Activated naive CD4-positive, alpha-beta T cell treated with anti-CD3 and anti-CD28 coated beads for 36 hours (primary cell): ENCODE measurements at regions of chr2 and their contacts with region 1.

Region 1: DNA sequence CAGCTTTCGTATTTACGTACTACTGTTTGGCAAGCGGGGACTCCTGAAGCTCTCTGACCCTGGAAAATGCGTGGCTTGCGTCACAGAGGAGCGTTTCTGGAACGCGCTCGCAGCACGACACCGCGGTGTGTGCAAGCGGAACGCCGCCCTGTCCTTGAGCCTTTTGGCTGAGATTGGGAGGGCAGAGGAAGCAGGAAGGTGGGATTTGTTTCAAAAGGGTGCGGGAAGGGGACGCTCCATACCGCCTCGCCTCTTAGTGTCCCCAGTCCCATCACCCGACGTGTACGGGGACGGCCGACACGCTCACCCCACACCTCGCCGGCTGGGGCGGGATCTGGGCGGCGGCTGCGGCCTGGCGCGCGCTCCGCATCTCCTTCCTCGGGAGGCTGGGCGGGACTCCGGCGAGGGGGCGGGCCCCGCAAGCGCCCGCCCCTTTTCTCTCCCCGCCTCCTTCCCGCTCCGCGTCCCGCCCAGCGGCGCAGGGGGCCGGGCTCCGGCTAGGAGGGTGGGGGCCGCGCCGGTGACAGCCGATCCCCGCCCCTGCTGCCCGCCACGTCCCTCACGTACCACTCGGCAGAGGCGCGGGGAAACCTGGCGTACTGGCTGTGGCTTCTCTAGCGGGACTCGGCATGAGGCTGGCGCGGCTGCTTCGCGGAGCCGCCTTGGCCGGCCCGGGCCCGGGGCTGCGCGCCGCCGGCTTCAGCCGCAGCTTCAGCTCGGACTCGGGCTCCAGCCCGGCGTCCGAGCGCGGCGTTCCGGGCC is at the start of gene PDK1:
- DNase-seq: peak; percentile 90
- H3K4me3 Mint-ChIP-seq: peak within 1 kb of the TSS; percentile 93
- H3K27ac Mint-ChIP-seq: peak within 1 kb of the TSS; percentile 94
- H3K4me1 Mint-ChIP-seq: peaks cover 53% of the 10 kb centered on the region
- H3K27me3 Mint-ChIP-seq: no peaks in the 10 kb centered on the region
- total RNA-seq, gene PDK1: 31.9 to 35.3 TPM

Region 2: GRCh38 chr2:171687287-171688128 is 868.2 kb before region 1 on chr2 and contains the start of gene DYNC1I2:
- CTCF ChIA-PET with region 1: no interaction called
- intact Hi-C with region 1: loop called (anchors 1 kb)
- DNase-seq: peak; percentile 88
- H3K4me3 Mint-ChIP-seq: peak within 1 kb of the TSS; percentile 84
- H3K27ac Mint-ChIP-seq: peak within 1 kb of the TSS; percentile 85
- H3K4me1 Mint-ChIP-seq: peaks cover 15% of the 10 kb centered on the region
- H3K27me3 Mint-ChIP-seq: no peaks in the 10 kb centered on the region
- total RNA-seq, gene DYNC1I2: 37.8 to 38.9 TPM

Region 3: GRCh38 chr2:171922230-171923022 is 633.3 kb before region 1 on chr2 and contains the start of gene HAT1:
- CTCF ChIA-PET with region 1: no interaction called
- intact Hi-C with region 1: loop called (anchors 2 kb)
- DNase-seq: peak; percentile 99
- H3K4me3 Mint-ChIP-seq: peak within 1 kb of the TSS; percentile 88
- H3K27ac Mint-ChIP-seq: peak within 1 kb of the TSS; percentile 97
- H3K4me1 Mint-ChIP-seq: peaks cover 34% of the 10 kb centered on the region
- H3K27me3 Mint-ChIP-seq: no peaks in the 10 kb centered on the region
- total RNA-seq, gene HAT1: 74.6 to 77.2 TPM

Region 4: DNA sequence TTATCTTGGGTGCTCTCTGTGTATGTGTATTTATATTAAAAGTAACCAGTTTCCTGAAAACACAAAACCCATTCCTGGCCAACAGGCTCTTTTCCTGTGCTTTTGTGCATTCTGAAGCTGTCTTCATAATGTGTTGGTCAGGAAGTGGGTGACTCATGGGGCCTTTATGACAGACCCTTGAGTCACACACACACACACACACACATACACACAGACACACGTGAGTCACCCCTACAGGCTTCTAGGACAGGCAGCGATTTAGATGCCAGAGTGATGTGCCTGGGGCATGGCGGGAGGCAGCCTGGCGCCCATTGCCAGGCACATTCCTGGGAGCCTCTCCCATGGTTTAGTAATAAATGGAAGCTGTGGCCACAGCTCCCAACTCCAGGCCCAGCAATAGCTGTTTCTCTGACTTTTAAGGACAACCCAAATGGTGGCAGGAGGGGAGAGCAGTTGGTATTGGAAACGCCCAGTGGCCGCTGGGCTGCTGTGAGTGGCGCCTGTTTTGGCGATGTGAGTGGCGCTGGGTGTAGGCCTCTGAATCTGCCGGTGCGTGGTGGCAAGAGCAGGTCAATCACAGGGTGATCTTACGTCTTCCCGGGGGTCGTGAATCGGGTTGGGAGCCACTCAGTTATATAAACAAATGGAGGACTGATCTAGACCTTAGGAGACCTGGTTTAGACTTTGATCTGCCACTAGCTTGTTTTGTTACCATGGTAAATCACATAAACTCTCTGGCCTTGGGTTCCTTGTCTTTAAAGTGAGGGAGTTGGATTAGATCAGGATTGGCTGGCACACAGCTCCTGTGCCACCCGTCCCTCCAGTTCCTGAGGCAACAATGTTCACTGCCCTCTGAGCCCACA is 302.3 kb before region 1 on chr2:
- CTCF ChIA-PET with region 1: no interaction called
- intact Hi-C with region 1: loop called (anchors 1 kb)
- DNase-seq: peak; percentile 77
- H3K4me3 Mint-ChIP-seq: no peak overlapping the region
- H3K27ac Mint-ChIP-seq: peak overlapping the region; percentile 65
- H3K4me1 Mint-ChIP-seq: peaks cover 36% of the 10 kb centered on the region
- H3K27me3 Mint-ChIP-seq: no peaks in the 10 kb centered on the region

Region 5: DNA sequence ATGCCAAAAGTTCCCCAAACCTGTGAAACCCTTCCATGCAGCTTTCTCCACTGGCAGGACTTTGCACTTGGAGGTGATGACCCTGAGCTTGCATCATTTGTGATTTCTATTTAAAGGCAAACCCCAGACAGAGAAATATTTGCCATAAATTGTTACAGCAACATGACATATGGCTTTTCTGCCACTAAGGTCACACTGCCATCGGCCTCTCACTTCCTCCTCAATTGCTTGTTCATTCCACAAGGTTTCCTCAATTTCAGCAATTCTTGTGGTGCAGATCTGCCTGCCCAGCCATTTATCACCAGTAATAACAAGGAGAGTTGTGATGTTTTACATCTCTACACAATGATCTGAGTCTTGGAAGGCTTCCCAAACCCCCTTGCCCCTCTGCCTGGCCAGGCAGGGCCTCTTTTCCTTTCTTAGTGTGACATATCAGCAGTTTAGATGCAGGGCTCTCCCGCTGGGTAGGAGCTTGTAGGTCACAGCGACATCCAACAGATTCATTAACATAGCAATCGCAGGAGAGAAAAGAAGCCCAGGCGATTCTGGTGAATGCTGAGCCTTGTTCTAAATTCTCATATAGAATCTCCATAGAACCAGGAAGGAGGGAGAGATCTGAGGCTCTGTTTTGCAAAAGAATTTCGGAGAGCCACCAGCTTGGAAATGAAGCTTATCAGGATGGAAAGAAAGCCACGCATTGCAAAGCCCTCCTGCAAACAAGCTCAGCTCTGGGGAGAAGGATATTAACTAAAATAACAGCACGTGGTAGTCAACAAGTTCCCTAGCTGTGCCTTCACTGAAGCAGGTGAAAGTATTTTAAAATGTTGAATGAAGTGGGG is 175.0 kb before region 1 on chr2:
- CTCF ChIA-PET with region 1: no interaction called
- intact Hi-C with region 1: no loop called
- DNase-seq: no peak
- H3K4me3 Mint-ChIP-seq: no peak overlapping the region
- H3K27ac Mint-ChIP-seq: no peak overlapping the region
- H3K4me1 Mint-ChIP-seq: no peaks in the 10 kb centered on the region
- H3K27me3 Mint-ChIP-seq: no peaks in the 10 kb centered on the region

Region 6: GRCh38 chr2:172456002-172456401 is 99.7 kb before region 1 on chr2:
- CTCF ChIA-PET with region 1: no interaction called
- intact Hi-C with region 1: no loop called
- DNase-seq: no peak
- H3K4me3 Mint-ChIP-seq: no peak overlapping the region
- H3K27ac Mint-ChIP-seq: no peak overlapping the region
- H3K4me1 Mint-ChIP-seq: peaks cover 82% of the 10 kb centered on the region
- H3K27me3 Mint-ChIP-seq: no peaks in the 10 kb centered on the region

Region 7: GRCh38 chr2:172496160-172496608 is 59.5 kb before region 1 on chr2:
- CTCF ChIA-PET with region 1: interaction called, 4 read pairs
- intact Hi-C with region 1: loop called (anchors 2 kb)
- DNase-seq: peak; percentile 61
- H3K4me3 Mint-ChIP-seq: peak overlapping the region; percentile 38
- H3K27ac Mint-ChIP-seq: peak overlapping the region; percentile 91
- H3K4me1 Mint-ChIP-seq: peaks cover 73% of the 10 kb centered on the region
- H3K27me3 Mint-ChIP-seq: no peaks in the 10 kb centered on the region

Region 8: GRCh38 chr2:172578054-172578453 is 22.4 kb after region 1 on chr2:
- CTCF ChIA-PET with region 1: no interaction called
- intact Hi-C with region 1: loop called (anchors 2 kb)
- DNase-seq: no peak
- H3K4me3 Mint-ChIP-seq: no peak overlapping the region
- H3K27ac Mint-ChIP-seq: peak overlapping the region; percentile 27
- H3K4me1 Mint-ChIP-seq: peaks cover 45% of the 10 kb centered on the region
- H3K27me3 Mint-ChIP-seq: no peaks in the 10 kb centered on the region

Region 9: GRCh38 chr2:172698041-172698863 is 142.5 kb after region 1 on chr2:
- CTCF ChIA-PET with region 1: no interaction called
- intact Hi-C with region 1: loop called (anchors 1 kb)
- DNase-seq: peak; percentile 41
- H3K4me3 Mint-ChIP-seq: no peak overlapping the region
- H3K27ac Mint-ChIP-seq: no peak overlapping the region
- H3K4me1 Mint-ChIP-seq: peaks cover 25% of the 10 kb centered on the region
- H3K27me3 Mint-ChIP-seq: no peaks in the 10 kb centered on the region